Left cardiac atrium (tissue), 4 donors: ENCODE measurements at regions of chr6 and their contacts with region 1.

Region 1: DNA sequence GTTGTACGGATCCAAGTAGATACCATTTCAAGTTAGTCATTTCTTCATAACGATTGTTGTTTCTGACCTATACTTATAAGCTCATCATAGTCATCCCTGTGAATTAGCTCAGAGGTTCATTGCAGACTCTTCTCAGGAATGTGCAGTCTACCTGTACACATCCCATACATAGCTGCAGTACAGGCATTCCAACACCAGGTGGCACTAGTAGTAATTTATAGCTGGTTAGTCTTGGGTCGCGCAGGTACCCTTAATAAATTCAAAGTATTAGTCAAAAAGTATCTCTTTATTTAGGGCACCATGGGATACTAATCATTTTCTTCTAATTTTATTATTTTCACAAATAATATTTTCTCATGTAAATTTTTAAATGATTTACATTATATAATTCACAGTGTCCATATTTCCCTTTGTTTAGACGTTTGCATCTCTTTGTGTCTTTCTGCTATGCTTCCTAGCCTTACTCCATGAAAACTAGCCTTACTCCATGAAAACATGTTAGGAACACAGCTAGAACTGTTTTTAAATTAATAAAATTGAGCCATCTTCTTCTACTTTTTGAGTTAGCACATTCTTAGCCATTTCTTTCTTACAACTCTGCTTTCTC is 128.6 kb upstream of the FAM83B start:
- DNase-seq: peak; percentile 26
- ATAC-seq: peak in 1 of 2 donors; percentile 49

Region 2: GRCh38 chr6:54846243-54846856 is 128.4 kb after region 1 on chr6 and contains the start of gene FAM83B:
- intact Hi-C with region 1: loop called in 1 of 2 experiments (anchors 10 kb)
- DNase-seq: peak; percentile 23
- ATAC-seq: peak; percentile 62 to 72
- total RNA-seq, gene FAM83B: 6.4 to 7.4 TPM

Region 3: GRCh38 chr6:54860739-54861138 is 142.8 kb after region 1 on chr6:
- intact Hi-C with region 1: no loop called
- DNase-seq: no peak
- ATAC-seq: no peak

Region 4: DNA sequence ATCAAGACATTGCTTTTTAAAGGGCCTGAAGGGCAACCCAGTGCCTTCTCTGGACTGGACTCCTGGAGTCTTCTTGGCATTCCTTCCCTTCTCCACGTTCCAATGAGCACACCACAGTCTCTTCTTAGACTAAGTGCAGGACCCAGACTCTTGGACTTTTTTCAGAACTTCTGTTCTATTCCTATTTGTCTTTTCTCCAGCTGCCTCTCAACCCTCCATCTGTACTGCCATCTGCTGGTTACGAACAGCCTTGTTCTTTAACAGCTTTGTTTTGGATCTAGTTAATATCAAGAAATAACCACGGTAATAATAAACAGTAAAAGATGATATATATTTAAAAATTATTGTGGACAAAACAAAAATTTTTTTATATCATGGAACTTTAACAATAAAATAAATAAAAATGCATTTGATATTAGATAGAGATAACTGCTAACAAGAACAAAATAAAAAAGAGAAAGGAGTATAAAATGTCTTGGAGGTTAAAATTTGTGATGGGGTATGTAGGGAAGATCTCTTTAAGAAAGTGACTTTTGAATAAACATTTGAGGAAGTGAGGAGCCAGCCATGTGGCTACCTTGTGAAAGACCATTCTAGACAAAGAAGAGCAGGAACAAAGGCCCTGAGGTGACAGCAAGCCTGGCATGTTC is 351.3 kb after region 1 on chr6:
- intact Hi-C with region 1: loop called in 1 of 2 experiments (anchors 5 kb)
- DNase-seq: no peak
- ATAC-seq: peak; percentile 36 to 61